Naive thymus-derived CD4-positive, alpha-beta T cell (primary cell): ENCODE measurements at regions of chr15 and their contacts with region 1.

Region 1: GRCh38 chr15:70097337-70098169 is at the start of gene TLE3:
- DNase-seq: peak; percentile 94 to 99 (median 98)
- ATAC-seq: peak; percentile 72
- H3K4me3 ChIP-seq: peak within 1 kb of the TSS; percentile 87
- H3K4me3 Mint-ChIP-seq: peak within 1 kb of the TSS; percentile 91 to 100 (median 99)
- H3K27ac ChIP-seq: peak within 1 kb of the TSS; percentile 87
- H3K27ac Mint-ChIP-seq: peak within 1 kb of the TSS; percentile 96 to 100 (median 98)
- H3K4me1 ChIP-seq: peaks cover 33 to 44% of the 10 kb centered on the region in 2 donors
- H3K4me1 Mint-ChIP-seq: peaks cover 34 to 62% (median 39%) of the 10 kb centered on the region in 7 donors
- H3K27me3 ChIP-seq: no peaks in the 10 kb centered on the region
- H3K27me3 Mint-ChIP-seq: peaks cover 0 to 27% (median 4%) of the 10 kb centered on the region in 5 donors
- total RNA-seq, gene TLE3: 84.5 to 183 (median 120) TPM

Region 2: DNA sequence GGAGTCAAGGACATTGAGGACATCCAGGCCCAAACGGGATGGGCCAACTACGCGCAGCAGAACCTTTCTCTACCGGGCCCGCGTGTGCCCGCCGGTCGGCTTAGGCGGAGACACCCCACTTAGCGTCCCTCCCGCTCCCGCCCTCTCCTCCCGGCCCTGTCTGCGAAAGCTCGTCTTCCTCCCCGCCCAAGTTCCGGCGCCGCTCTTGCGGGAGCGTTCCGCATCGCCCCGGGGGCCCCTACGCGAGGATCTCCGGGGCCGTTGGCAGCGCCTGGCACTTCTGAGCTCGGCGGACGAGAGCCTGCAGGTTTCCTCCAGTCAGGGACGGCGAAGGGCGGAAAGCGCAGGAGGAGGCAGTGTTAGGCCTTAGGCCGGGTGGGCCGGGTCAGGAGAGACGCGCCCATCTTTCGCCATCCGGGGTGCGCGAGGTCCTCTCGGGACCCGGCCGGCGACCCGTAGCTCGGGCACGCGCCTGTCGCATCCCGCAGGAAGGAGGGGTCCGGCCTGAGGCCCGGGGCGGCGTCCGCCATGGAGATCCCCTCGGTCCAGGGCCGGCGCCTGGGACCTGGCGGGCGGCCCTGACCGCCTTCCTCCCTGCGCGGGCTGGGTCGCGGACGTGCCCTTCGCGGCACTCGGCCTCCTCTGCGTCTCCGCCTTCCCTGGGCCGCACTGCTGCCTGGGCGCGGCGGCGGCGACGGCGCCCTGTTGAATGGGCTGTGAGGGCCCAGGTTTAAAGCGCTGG is 1819.8 kb before region 1 on chr15 and contains the start of gene FEM1B:
- CTCF ChIA-PET with region 1: no interaction called
- POLR2A ChIA-PET with region 1: no interaction called
- intact Hi-C with region 1: loop called in 1 of 2 experiments (anchors 5 kb)
- DNase-seq: peak; percentile 82 to 92 (median 88)
- ATAC-seq: peak; percentile 89
- H3K4me3 ChIP-seq: peak within 1 kb of the TSS; percentile 92
- H3K4me3 Mint-ChIP-seq: peak within 1 kb of the TSS; percentile 86 to 100 (median 96)
- H3K27ac ChIP-seq: peak within 1 kb of the TSS; percentile 90
- H3K27ac Mint-ChIP-seq: peak within 1 kb of the TSS; percentile 89 to 99 (median 98)
- H3K4me1 ChIP-seq: peaks cover 33 to 38% of the 10 kb centered on the region in 2 donors
- H3K4me1 Mint-ChIP-seq: peaks cover 40 to 63% (median 56%) of the 10 kb centered on the region in 7 donors
- H3K27me3 ChIP-seq: no peaks in the 10 kb centered on the region
- H3K27me3 Mint-ChIP-seq: no peaks in the 10 kb centered on the region
- total RNA-seq, gene FEM1B: 56.5 to 73.2 (median 62.0) TPM

Region 3: DNA sequence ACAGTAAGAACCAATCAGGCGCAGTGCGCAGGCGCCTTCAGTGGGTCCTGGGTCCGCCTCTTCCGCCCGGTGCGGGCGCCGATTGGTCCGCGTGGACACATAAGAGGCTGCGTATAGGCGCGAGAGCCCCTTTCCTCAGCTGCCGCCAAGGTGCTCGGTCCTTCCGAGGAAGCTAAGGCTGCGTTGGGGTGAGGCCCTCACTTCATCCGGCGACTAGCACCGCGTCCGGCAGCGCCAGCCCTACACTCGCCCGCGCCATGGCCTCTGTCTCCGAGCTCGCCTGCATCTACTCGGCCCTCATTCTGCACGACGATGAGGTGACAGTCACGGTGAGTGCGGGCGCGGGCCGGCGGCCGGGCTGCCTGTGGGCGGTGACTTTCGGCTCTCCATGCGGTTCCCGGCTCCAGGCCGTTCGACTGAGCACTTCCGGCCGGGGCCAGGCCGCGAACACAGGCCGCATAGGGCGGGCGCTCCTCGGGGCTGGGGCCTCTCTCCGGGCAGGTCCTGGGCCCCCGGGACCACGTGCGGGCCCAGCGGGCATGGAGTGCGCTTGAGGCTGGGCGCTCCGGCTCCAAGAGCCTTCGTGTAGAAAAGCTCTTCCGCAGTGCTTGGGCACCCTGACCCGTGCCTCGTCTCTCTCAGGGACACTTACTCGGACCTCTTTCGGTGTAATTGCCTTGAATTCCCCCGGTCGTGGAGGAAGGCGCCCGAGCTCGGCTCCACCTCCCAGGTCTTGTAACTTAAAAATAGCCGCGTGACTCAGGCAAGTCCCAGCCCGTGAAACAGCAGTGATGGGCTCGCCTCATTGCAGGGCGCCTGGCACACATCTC is 644.6 kb before region 1 on chr15 and contains the start of gene RPLP1:
- CTCF ChIA-PET with region 1: no interaction called
- POLR2A ChIA-PET with region 1: interaction called, 6 read pairs
- intact Hi-C with region 1: loop called (anchors 1 to 2 kb)
- DNase-seq: peak; percentile 93 to 97 (median 96)
- ATAC-seq: peak; percentile 93
- H3K4me3 ChIP-seq: peak within 1 kb of the TSS; percentile 82
- H3K4me3 Mint-ChIP-seq: peak within 1 kb of the TSS; percentile 91 to 100 (median 99)
- H3K27ac ChIP-seq: peak within 1 kb of the TSS; percentile 84
- H3K27ac Mint-ChIP-seq: peak within 1 kb of the TSS; percentile 96 to 100 (median 98)
- H3K4me1 ChIP-seq: peaks cover 14 to 33% of the 10 kb centered on the region in 2 donors
- H3K4me1 Mint-ChIP-seq: peaks cover 29 to 52% (median 42%) of the 10 kb centered on the region in 7 donors
- H3K27me3 ChIP-seq: no peaks in the 10 kb centered on the region
- H3K27me3 Mint-ChIP-seq: no peaks in the 10 kb centered on the region
- total RNA-seq, gene RPLP1: 1,719 to 2,941 (median 2,467) TPM

Region 4: GRCh38 chr15:69576035-69576526 is 521.5 kb before region 1 on chr15:
- CTCF ChIA-PET with region 1: no interaction called
- POLR2A ChIA-PET with region 1: no interaction called
- intact Hi-C with region 1: loop called (anchors 1 to 2 kb)
- DNase-seq: peak; percentile 38 to 69 (median 58)
- ATAC-seq: peak; percentile 87
- H3K4me3 ChIP-seq: no peak overlapping the region
- H3K4me3 Mint-ChIP-seq: no peak overlapping the region
- H3K27ac ChIP-seq: no peak overlapping the region
- H3K27ac Mint-ChIP-seq: peak overlapping the region in 3 of 9 donors; percentile 23 to 38 (median 24)
- H3K4me1 ChIP-seq: peaks cover 7 to 9% of the 10 kb centered on the region in 2 donors
- H3K4me1 Mint-ChIP-seq: peaks cover 14 to 44% (median 30%) of the 10 kb centered on the region in 7 donors
- H3K27me3 ChIP-seq: no peaks in the 10 kb centered on the region
- H3K27me3 Mint-ChIP-seq: peaks cover 0 to 11% (median 0%) of the 10 kb centered on the region in 5 donors

Region 5: GRCh38 chr15:69755551-69756310 is 341.8 kb before region 1 on chr15:
- CTCF ChIA-PET with region 1: interaction called, 4 read pairs
- POLR2A ChIA-PET with region 1: interaction called, 61 read pairs
- intact Hi-C with region 1: loop called (anchors 1 kb)
- DNase-seq: peak in 8 of 9 donors; percentile 61 to 79 (median 68)
- ATAC-seq: peak; percentile 62
- H3K4me3 ChIP-seq: peak overlapping the region; percentile 14
- H3K4me3 Mint-ChIP-seq: peak overlapping the region; percentile 39 to 81 (median 74)
- H3K27ac ChIP-seq: no peak overlapping the region
- H3K27ac Mint-ChIP-seq: peak overlapping the region; percentile 5 to 87 (median 48)
- H3K4me1 ChIP-seq: peaks cover 67 to 70% of the 10 kb centered on the region in 2 donors
- H3K4me1 Mint-ChIP-seq: peaks cover 72 to 91% (median 83%) of the 10 kb centered on the region in 7 donors
- H3K27me3 ChIP-seq: no peaks in the 10 kb centered on the region
- H3K27me3 Mint-ChIP-seq: peaks cover 0 to 19% (median 9%) of the 10 kb centered on the region in 5 donors

Region 6: DNA sequence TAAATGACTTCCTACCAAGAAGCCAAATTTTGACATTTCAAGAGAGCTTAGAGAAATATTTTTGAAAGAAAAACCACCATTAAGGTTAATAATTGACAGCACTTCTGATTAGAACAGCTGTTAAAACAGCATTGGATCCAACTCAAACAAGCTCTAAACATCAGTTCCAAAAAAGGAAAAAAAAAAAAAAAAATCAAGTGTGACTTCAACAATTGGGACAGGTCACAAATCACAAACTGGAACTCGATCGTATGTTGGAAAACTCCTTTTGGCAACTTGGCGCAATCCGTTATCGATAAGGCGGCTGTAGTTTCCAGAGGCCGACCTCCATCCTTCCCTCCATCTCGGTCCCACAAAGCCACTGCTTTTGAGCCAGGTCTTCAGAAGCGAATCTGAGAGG is 17.7 kb before region 1 on chr15:
- CTCF ChIA-PET with region 1: interaction called, 3 read pairs
- POLR2A ChIA-PET with region 1: interaction called, 3 read pairs
- intact Hi-C with region 1: loop called in 1 of 2 experiments (anchors 2 kb)
- DNase-seq: no peak
- ATAC-seq: no peak
- H3K4me3 ChIP-seq: no peak overlapping the region
- H3K4me3 Mint-ChIP-seq: no peak overlapping the region
- H3K27ac ChIP-seq: no peak overlapping the region
- H3K27ac Mint-ChIP-seq: peak overlapping the region in 1 of 9 donors; percentile 36
- H3K4me1 ChIP-seq: peaks cover 12% of the 10 kb centered on the region in 2 donors
- H3K4me1 Mint-ChIP-seq: peaks cover 25 to 75% (median 60%) of the 10 kb centered on the region in 7 donors
- H3K27me3 ChIP-seq: no peaks in the 10 kb centered on the region
- H3K27me3 Mint-ChIP-seq: no peaks in the 10 kb centered on the region

Region 7: GRCh38 chr15:70121624-70122297 is 24.2 kb after region 1 on chr15:
- CTCF ChIA-PET with region 1: no interaction called
- POLR2A ChIA-PET with region 1: no interaction called
- intact Hi-C with region 1: no loop called
- DNase-seq: no peak
- ATAC-seq: no peak
- H3K4me3 ChIP-seq: no peak overlapping the region
- H3K4me3 Mint-ChIP-seq: no peak overlapping the region
- H3K27ac ChIP-seq: no peak overlapping the region
- H3K27ac Mint-ChIP-seq: no peak overlapping the region
- H3K4me1 ChIP-seq: no peaks in the 10 kb centered on the region
- H3K4me1 Mint-ChIP-seq: peaks cover 0 to 4% (median 0%) of the 10 kb centered on the region in 7 donors
- H3K27me3 ChIP-seq: no peaks in the 10 kb centered on the region
- H3K27me3 Mint-ChIP-seq: peaks cover 0 to 44% (median 0%) of the 10 kb centered on the region in 5 donors

Region 8: GRCh38 chr15:70259028-70259424 is 161.5 kb after region 1 on chr15:
- CTCF ChIA-PET with region 1: no interaction called
- POLR2A ChIA-PET with region 1: interaction called, 3 read pairs
- intact Hi-C with region 1: loop called in 1 of 2 experiments (anchors 2 kb)
- DNase-seq: peak in 8 of 9 donors; percentile 35 to 61 (median 54)
- ATAC-seq: peak; percentile 58
- H3K4me3 ChIP-seq: peak overlapping the region; percentile 40
- H3K4me3 Mint-ChIP-seq: peak overlapping the region; percentile 79 to 96 (median 84)
- H3K27ac ChIP-seq: peak overlapping the region; percentile 56
- H3K27ac Mint-ChIP-seq: peak overlapping the region; percentile 76 to 95 (median 92)
- H3K4me1 ChIP-seq: peaks cover 29 to 40% of the 10 kb centered on the region in 2 donors
- H3K4me1 Mint-ChIP-seq: peaks cover 46 to 69% (median 51%) of the 10 kb centered on the region in 7 donors
- H3K27me3 ChIP-seq: no peaks in the 10 kb centered on the region
- H3K27me3 Mint-ChIP-seq: peaks cover 0 to 34% (median 0%) of the 10 kb centered on the region in 5 donors